ENCODE measurements at regions of chr12 and their contacts with region 1.

Region 1: GRCh38 chr12:10721651-10722501 is 1.2 kb downstream of the YBX3 start:
- DNase-seq: peak; percentile 23 to 90 (median 62)

Region 2: DNA sequence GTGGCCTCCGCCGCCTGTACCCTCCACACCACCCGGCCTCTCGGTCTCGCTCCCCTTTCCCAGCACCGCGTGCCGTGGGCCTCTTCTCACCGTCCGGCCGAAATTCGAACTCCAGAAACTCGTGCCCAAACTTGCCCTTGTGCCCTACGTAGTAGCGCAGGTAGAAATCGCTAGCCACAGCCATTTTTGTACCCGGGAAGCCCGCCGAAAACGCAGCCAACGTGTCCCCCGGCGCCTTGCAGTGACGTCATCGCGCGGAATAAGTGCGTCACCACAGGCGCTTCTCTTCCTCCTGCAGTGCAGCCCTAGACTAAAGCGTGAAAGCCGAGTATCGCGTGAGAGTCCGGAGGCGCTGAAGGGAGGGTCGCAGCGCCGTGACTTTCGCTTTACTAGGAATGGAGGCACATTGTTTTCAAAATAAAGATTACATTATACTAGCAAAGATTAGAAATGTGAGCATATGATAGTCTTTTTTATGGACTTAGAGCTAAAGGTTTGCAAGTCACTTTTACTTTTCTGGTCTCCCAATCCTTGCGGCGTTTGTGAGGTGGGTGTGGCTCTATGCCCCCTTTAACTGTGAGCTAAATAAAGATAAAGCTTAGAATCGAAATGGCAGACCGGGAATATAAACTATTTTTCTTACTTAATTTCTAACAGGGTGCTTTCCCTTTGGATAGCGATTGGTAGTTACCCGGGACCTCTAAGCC is 108.4 kb before region 1 on chr12 and contains the start of gene MAGOHB:
- intact Hi-C with region 1: loop called (anchors 5 kb)
- DNase-seq: peak; percentile 86 to 98 (median 92)

Region 3: DNA sequence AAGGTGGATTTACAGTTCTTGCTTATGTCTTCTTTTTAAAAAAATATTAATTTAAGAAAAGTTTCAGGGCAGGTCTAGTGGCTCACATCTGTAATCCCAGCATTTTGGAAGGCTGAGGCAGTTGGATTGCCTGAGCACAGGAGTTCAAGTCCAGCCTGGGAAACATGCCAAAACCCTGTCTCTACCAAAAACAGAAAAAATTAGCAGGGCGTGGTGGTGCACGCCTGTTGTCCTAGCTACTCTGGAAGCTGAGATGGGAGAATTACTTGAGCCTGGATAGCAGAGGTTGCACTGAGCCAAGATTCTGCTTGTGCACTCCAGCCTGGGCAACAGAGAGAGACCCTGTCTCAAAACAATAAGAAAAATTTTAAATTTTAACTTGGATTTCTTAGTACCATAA is 345.6 kb after region 1 on chr12:
- intact Hi-C with region 1: no loop called
- DNase-seq: no peak